ENCODE measurements at regions of chr12 and their contacts with region 1.

Region 1: GRCh38 chr12:7995266-7995963 is 37.1 kb upstream of the FOXJ2 start:
- DNase-seq: peak; percentile 88
- H3K4me3 Mint-ChIP-seq: no peak overlapping the region
- H3K27ac Mint-ChIP-seq: no peak overlapping the region
- H3K4me1 Mint-ChIP-seq: peaks cover 23% of the 10 kb centered on the region
- H3K27me3 Mint-ChIP-seq: peaks cover 3% of the 10 kb centered on the region

Region 2: GRCh38 chr12:7859552-7859951 is 135.9 kb before region 1 on chr12:
- CTCF ChIA-PET with region 1: interaction called, 34 read pairs
- DNase-seq: no peak
- H3K4me3 Mint-ChIP-seq: no peak overlapping the region
- H3K27ac Mint-ChIP-seq: no peak overlapping the region
- H3K4me1 Mint-ChIP-seq: peaks cover 11% of the 10 kb centered on the region
- H3K27me3 Mint-ChIP-seq: peaks cover 33% of the 10 kb centered on the region

Region 3: GRCh38 chr12:7959701-7960121 is 35.7 kb before region 1 on chr12:
- CTCF ChIA-PET with region 1: interaction called, 38 read pairs
- DNase-seq: peak; percentile 72
- H3K4me3 Mint-ChIP-seq: peak overlapping the region; percentile 78
- H3K27ac Mint-ChIP-seq: peak overlapping the region; percentile 89
- H3K4me1 Mint-ChIP-seq: peaks cover 49% of the 10 kb centered on the region
- H3K27me3 Mint-ChIP-seq: no peaks in the 10 kb centered on the region

Region 4: DNA sequence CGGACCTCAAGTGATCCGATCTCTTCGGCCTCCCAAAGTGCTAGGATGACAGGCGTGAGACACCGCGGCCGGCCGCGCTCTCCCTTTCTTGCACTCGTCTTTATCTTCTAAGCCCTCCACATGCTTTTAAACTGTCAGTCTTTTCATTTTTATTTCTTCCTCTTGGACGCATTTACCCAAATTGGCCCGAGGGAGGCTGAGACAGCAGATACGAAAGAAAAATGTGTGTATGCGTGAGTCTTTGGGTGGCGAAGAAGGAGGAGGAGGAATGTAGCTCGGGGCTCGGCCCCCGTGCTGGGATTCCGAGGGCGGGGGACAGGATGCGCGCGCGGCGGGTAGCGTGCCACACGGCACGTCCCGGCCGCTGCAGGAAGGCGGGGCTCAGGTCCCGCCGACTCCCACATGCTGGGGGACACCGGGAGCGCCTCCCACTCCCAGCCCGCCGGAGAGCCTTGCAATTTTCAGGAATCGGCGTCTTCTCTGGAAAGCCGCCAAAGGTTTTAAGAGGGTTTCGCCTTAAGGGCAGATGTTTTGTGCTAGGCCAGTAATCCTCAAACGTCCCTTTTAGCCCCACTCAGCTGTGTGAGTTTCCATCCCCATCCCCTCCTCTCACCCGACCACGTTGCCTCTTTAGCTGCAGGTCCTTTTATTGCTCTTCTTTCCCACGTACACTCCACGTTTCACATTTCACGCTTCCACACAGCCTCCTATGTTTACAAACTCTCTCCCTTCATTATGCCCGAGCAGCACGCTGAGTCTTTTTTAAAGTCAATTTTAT is 24.8 kb before region 1 on chr12:
- CTCF ChIA-PET with region 1: interaction called, 10 read pairs
- DNase-seq: peak; percentile 91
- H3K4me3 Mint-ChIP-seq: peak overlapping the region; percentile 75
- H3K27ac Mint-ChIP-seq: peak overlapping the region; percentile 96
- H3K4me1 Mint-ChIP-seq: peaks cover 49% of the 10 kb centered on the region
- H3K27me3 Mint-ChIP-seq: no peaks in the 10 kb centered on the region